HEK293T (cell line): ENCODE measurements at regions of chr16 and their contacts with region 1.

Region 1: GRCh38 chr16:25084797-25085196 is 26.7 kb upstream of the LCMT1 start:
- DNase-seq: no peak

Region 2: DNA sequence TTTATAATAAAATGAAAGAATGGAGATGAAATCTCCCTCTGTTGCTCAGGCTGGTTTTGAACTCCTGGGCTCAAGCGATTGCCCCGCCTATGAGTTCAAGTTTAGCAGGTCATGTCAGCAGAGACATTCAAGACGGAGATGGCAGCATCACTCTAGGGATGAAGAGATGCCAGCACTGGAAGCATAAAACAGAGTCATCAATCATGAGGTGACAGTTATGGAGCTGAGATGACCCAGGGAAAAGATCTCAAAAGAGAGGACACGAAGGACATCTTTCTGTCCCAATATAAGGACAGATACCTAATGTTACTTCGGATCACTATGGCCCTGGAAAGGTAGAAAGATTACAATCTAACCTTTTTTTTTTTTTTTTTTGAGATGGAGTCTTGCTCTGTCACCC is 15.7 kb after region 1 on chr16:
- CTCF ChIA-PET with region 1: interaction called, 12 read pairs
- POLR2A ChIA-PET with region 1: no interaction called
- DNase-seq: no peak